Posterior cingulate gyrus (tissue), 11 donors: ENCODE measurements at regions of chr7 and their contacts with region 1.

Region 1: DNA sequence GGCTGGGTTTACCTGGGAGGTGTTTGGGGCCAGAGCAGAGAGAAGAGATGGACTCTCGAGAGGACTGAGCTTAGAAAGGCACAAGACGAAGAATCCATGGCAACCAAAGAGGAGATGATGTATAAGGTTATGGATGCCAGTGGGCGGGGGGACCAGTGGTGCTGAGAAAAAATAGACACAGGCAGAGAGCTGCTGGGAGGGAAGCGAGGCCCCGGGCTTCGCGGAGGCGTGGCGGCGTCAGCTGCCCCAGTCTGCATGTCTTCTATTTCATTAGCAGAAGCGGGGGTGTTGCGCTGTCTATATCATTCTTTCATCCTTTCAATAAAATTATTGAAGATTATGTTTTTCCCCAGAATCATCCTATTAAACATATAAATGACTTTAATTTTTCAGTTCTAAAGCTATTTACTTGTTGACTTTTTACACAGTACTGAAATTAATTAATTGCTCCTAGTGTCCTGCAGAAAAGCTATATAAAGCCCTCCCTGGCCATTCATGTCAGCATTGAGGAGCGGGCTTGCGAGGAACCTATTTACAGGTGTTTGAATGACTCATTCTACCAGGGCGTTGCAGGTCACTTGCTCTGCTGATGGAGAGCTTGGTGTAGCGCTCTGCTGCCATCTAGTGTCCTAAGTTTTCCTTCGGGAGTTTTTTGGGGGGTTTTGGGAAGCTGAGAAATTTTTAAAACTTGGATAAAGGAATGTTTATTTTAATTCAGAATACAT is 42.9 kb upstream of the BHLHA15 start:
- DNase-seq: peak in 8 of 10 donors; percentile 58 to 93 (median 70)

Region 2: GRCh38 chr7:98106647-98107445 is 61.5 kb before region 1 on chr7 and contains the start of gene LMTK2:
- intact Hi-C with region 1: loop called (anchors 1 kb)
- DNase-seq: peak; percentile 91 to 99 (median 96)